ENCODE measurements at regions of chr2 and their contacts with region 1.

Region 1: GRCh38 chr2:112958428-112959108 is 19.2 kb upstream of the IL36G start:
- DNase-seq: no peak
- H3K4me3 ChIP-seq: no peak overlapping the region
- H3K27me3 ChIP-seq: peaks cover 7% of the 10 kb centered on the region
- CTCF ChIP-seq: peak; percentile 86

Region 2: GRCh38 chr2:112947374-112947773 is 11.2 kb before region 1 on chr2:
- CTCF ChIA-PET with region 1: interaction called, 35 read pairs
- POLR2A ChIA-PET with region 1: no interaction called
- DNase-seq: no peak
- H3K4me3 ChIP-seq: no peak overlapping the region
- H3K27me3 ChIP-seq: peaks cover 4% of the 10 kb centered on the region; the same call in 1 of the 2 replicates
- CTCF ChIP-seq: no peak

Region 3: GRCh38 chr2:112972423-112973086 is 14.0 kb after region 1 on chr2:
- CTCF ChIA-PET with region 1: interaction called, 11 read pairs
- POLR2A ChIA-PET with region 1: no interaction called
- DNase-seq: no peak
- H3K4me3 ChIP-seq: no peak overlapping the region
- H3K27me3 ChIP-seq: peaks cover 9% of the 10 kb centered on the region
- CTCF ChIP-seq: no peak

Measured in BJ (cell line).